ENCODE measurements at regions of chr11 and their contacts with region 1.

Region 1: GRCh38 chr11:8092587-8093424 is 11.8 kb downstream of the TUB start:
- DNase-seq: peak; percentile 76
- H3K4me3 Mint-ChIP-seq: no peak overlapping the region
- H3K27ac Mint-ChIP-seq: no peak overlapping the region
- H3K4me1 Mint-ChIP-seq: no peaks in the 10 kb centered on the region
- H3K27me3 Mint-ChIP-seq: no peaks in the 10 kb centered on the region
- CTCF ChIP-seq: peak; percentile 50

Region 2: GRCh38 chr11:7098235-7098832 is 994.5 kb before region 1 on chr11:
- CTCF ChIA-PET with region 1: no interaction called
- POLR2A ChIA-PET with region 1: no interaction called
- intact Hi-C with region 1: loop called (anchors 5 kb)
- DNase-seq: peak; percentile 63
- H3K4me3 Mint-ChIP-seq: no peak overlapping the region
- H3K27ac Mint-ChIP-seq: no peak overlapping the region
- H3K4me1 Mint-ChIP-seq: no peaks in the 10 kb centered on the region
- H3K27me3 Mint-ChIP-seq: peaks cover 84% of the 10 kb centered on the region
- CTCF ChIP-seq: peak; percentile 73

Region 3: GRCh38 chr11:8025816-8026215 is 67.0 kb before region 1 on chr11:
- CTCF ChIA-PET with region 1: interaction called, 786 read pairs
- POLR2A ChIA-PET with region 1: no interaction called
- intact Hi-C with region 1: no loop called
- DNase-seq: peak; percentile 25
- H3K4me3 Mint-ChIP-seq: no peak overlapping the region
- H3K27ac Mint-ChIP-seq: no peak overlapping the region
- H3K4me1 Mint-ChIP-seq: no peaks in the 10 kb centered on the region
- H3K27me3 Mint-ChIP-seq: peaks cover 21% of the 10 kb centered on the region
- CTCF ChIP-seq: no peak

Region 4: GRCh38 chr11:8056810-8057463 is 35.9 kb before region 1 on chr11:
- CTCF ChIA-PET with region 1: interaction called, 13 read pairs
- POLR2A ChIA-PET with region 1: interaction called, 3 read pairs
- intact Hi-C with region 1: no loop called
- DNase-seq: peak; percentile 39
- H3K4me3 Mint-ChIP-seq: no peak overlapping the region
- H3K27ac Mint-ChIP-seq: no peak overlapping the region
- H3K4me1 Mint-ChIP-seq: peaks cover 8% of the 10 kb centered on the region
- H3K27me3 Mint-ChIP-seq: peaks cover under 1% of the 10 kb centered on the region
- CTCF ChIP-seq: no peak

Region 5: DNA sequence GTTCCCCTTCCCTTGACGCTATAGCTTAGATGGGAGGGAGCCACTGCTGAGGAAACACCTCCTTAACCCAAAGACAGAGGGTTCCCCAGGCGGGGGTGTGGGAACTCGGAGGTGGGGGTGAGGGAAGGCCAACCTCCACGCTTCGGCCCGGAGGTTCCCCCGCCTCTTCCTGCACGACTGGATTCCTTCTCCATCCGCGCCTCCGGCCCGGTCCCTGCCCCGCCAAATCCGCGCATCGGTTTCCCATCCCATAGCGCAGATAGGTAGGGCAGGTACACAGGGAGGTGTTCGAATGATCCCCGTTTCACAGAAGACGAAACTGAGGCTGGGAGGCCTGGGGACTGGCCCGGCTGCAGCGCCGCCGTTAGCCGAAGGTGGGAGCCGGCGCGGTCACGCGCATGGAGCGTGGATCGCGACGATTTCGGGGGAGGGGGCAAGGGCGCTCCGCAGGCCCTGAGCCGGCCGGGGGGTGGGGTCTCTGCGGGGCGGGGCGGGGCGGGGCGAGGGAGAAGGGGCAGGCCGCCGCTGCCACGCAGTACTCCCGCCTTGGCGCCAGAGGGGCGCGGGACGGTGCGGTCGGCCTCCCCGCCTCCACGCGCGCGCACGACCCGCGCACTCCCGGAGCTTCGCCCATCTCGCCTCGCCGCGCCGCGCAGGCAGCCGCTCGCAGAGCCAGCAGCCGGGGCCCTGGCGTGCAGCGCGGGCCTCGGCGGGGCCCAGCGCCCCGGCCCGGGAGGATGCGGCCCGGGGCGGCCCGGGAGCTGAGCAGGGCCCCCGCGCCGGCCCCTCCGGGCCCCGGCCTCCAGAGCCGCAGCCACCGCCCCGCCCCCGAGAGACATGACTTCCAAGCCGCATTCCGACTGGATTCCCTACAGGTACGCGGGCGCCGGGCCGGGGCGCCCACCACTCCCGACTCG is 11.9 kb before region 1 on chr11 and contains the start of gene TUB:
- CTCF ChIA-PET with region 1: interaction called, 116 read pairs
- POLR2A ChIA-PET with region 1: interaction called, 5 read pairs
- intact Hi-C with region 1: no loop called
- DNase-seq: no peak
- H3K4me3 Mint-ChIP-seq: peak within 1 kb of the TSS; percentile 57
- H3K27ac Mint-ChIP-seq: no peak within 1 kb of the TSS
- H3K4me1 Mint-ChIP-seq: no peaks in the 10 kb centered on the region
- H3K27me3 Mint-ChIP-seq: peaks cover 7% of the 10 kb centered on the region
- CTCF ChIP-seq: no peak
- total RNA-seq, gene TUB: 1.4 and 1.8 TPM in 2 replicates

Region 6: DNA sequence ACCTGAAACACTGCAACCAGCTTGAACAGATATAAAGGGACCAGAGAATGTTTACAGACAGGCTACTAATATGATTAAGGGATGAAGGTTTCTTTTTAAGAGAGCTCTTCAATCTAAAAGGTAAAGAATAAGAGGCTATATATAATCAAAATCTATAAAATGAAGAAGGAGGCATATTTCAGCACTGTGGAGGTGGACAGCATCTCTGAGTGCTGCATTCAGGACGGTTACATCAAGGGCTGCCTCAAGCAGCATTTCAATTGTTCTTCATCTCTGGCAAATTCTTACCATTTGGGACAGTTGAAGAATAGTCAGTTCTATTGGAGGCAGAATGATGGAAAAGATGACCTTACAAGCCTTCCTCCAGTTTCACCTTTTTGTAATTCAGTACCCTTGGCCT is 310.5 kb after region 1 on chr11:
- CTCF ChIA-PET with region 1: no interaction called
- POLR2A ChIA-PET with region 1: no interaction called
- intact Hi-C with region 1: no loop called
- DNase-seq: peak; percentile 27
- H3K4me3 Mint-ChIP-seq: no peak overlapping the region
- H3K27ac Mint-ChIP-seq: no peak overlapping the region
- H3K4me1 Mint-ChIP-seq: no peaks in the 10 kb centered on the region
- H3K27me3 Mint-ChIP-seq: peaks cover 28% of the 10 kb centered on the region
- CTCF ChIP-seq: no peak